ENCODE measurements at regions of chr3 and their contacts with region 1.

Region 1: DNA sequence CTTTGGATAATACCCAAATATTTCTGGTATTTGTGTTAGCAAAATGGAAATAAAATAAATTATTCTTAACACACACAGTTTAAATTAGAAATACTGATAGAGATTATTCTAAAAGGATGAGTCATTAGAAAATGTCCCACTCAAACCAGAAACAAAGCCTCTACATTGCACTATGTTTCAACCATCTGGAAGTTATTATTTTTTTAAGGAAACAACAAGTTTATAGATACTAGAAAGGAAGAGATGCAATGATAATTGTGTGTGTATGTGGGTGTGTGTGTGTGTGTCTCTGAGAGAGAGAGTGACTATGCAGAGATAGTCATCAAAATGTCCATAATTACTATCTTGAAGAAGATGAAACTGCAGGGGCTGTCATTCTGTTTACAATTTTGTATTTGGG is 1340.5 kb downstream of the ROBO1 start:
- DNase-seq: no peak
- H3K4me3 ChIP-seq: no peak overlapping the region
- CTCF ChIP-seq: no peak

Region 2: GRCh38 chr3:78368581-78369345 is 58.5 kb before region 1 on chr3:
- in situ Hi-C with region 1: loop called (anchors 10 kb)
- DNase-seq: no peak
- H3K4me3 ChIP-seq: no peak overlapping the region
- CTCF ChIP-seq: no peak

Measured in astrocyte of the cerebellum (primary cell).